Activated CD8-positive, alpha-beta T cell treated with anti-CD3 and anti-CD28 coated beads, Interleukin-2, amount 10 ng/mL, durations not matched to agents 7 days and 5 days (primary cell): ENCODE measurements at regions of chr1 and their contacts with region 1.

Region 1: DNA sequence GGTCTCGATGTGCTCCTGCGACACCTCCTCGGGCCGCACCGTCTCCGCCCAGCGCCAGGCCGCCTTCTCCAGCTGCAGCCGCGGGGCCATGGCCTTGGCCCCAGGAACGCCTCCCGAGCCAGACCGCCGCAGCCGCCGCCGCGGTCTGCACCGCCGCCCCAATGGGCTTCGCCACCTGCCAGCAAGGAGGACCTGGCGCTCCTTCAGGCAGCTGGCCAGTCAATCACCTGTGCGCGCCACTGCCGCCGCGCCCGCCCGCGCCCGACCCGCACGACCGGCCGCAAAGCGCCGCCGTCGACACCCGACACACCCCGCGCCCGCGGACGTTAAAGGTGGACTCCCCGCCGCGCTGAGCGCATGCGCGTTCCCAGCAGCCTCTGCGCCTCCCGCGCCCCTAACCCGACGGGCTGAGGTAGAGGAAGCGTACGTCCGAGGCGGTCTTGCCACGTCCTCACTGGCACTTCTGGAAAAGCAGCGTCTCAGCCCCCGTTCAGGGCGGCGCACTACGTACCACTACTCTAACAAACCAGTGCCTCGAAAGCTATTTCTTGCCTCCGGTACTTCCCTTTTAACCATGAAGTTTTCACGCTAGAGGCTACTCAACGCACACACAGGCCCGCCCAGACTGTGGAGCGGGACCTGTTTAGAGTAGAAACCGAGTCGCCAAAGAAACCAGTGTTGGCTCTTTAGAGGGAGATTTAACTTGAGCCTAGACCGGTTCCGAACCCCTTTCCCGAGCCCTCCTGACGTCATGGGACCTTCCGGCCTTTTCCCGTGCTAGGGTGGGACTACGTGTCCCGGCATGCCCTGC is at the start of gene USP48:
- DNase-seq: peak; percentile 97
- ATAC-seq: peak; percentile 89
- H3K4me3 Mint-ChIP-seq: peak within 1 kb of the TSS; percentile 82
- H3K27ac Mint-ChIP-seq: peak within 1 kb of the TSS; percentile 99
- H3K4me1 Mint-ChIP-seq: peaks cover 24% of the 10 kb centered on the region
- H3K27me3 Mint-ChIP-seq: peaks cover 3% of the 10 kb centered on the region
- total RNA-seq, gene USP48: 71.3 to 74.9 TPM

Region 2: GRCh38 chr1:21626851-21627339 is 156.2 kb before region 1 on chr1:
- CTCF ChIA-PET with region 1: no interaction called
- POLR2A ChIA-PET with region 1: no interaction called
- DNase-seq: no peak
- ATAC-seq: no peak
- H3K4me3 Mint-ChIP-seq: no peak overlapping the region
- H3K27ac Mint-ChIP-seq: no peak overlapping the region
- H3K4me1 Mint-ChIP-seq: peaks cover 2% of the 10 kb centered on the region
- H3K27me3 Mint-ChIP-seq: peaks cover 12% of the 10 kb centered on the region

Region 3: DNA sequence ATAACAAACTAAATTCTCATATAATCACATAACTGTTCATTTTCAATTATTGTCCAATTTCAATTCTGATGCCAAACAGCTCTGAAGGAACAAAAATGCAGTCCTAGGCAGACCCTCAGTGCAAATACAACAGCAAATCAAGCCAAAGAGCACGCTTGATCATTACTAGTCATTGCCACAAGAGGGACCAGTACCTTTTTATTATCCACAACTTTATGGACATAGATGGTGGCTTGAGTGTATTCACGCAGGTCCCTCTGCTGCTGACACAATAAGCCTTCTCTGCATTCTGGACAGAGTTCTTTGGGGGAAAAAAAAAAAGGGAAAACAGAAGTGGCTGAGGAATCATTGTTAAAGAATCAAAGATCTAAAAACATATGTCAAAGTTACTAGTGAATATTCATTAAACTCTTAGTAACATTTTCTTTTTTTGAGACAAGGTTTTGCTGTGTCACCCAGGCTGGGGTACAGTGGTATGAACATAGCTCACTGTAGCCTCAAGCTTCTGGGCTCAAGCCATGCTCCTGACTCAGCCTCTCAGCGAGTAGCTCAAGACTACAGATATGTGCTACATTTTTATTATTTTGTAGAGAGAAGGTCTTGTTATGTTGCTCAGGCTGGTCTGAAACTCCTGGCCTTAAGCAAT is 79.6 kb before region 1 on chr1:
- CTCF ChIA-PET with region 1: interaction called, 12 read pairs
- POLR2A ChIA-PET with region 1: interaction called, 3 read pairs
- DNase-seq: no peak
- ATAC-seq: no peak
- H3K4me3 Mint-ChIP-seq: no peak overlapping the region
- H3K27ac Mint-ChIP-seq: no peak overlapping the region
- H3K4me1 Mint-ChIP-seq: peaks cover 28% of the 10 kb centered on the region
- H3K27me3 Mint-ChIP-seq: no peaks in the 10 kb centered on the region

Region 4: GRCh38 chr1:21770201-21770600 is 12.9 kb before region 1 on chr1:
- CTCF ChIA-PET with region 1: interaction called, 7 read pairs
- POLR2A ChIA-PET with region 1: interaction called, 14 read pairs
- DNase-seq: no peak
- ATAC-seq: no peak
- H3K4me3 Mint-ChIP-seq: no peak overlapping the region
- H3K27ac Mint-ChIP-seq: peak overlapping the region; percentile 0
- H3K4me1 Mint-ChIP-seq: peaks cover 62% of the 10 kb centered on the region
- H3K27me3 Mint-ChIP-seq: no peaks in the 10 kb centered on the region

Region 5: DNA sequence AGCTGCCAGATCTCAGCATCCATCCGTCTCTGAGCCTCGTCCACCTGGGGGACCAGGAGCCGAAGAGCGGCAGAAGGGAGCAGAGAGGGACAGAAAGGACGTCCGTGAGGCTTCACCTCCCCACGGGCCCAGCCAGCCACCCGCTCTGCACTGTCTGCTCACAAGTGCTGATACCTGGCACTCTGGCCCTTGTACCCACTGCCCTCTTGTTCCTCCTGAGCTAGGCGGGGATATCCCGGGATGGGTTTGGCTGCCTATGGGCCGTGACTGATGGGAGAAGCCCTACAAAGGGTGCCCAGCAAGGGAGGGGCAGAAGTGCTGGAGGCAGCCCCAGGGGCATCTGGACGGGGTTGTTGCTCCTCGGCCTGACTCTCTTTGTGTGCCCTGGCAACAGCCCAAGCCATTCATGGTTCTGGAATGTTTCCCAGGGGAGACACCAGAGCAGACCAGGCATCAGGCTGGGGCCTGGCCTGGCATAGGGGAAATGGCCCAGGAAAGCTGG is 86.6 kb after region 1 on chr1:
- CTCF ChIA-PET with region 1: no interaction called
- POLR2A ChIA-PET with region 1: no interaction called
- DNase-seq: no peak
- ATAC-seq: no peak
- H3K4me3 Mint-ChIP-seq: no peak overlapping the region
- H3K27ac Mint-ChIP-seq: no peak overlapping the region
- H3K4me1 Mint-ChIP-seq: peaks cover 5% of the 10 kb centered on the region
- H3K27me3 Mint-ChIP-seq: no peaks in the 10 kb centered on the region

Region 6: GRCh38 chr1:21882669-21883415 is 99.8 kb after region 1 on chr1:
- CTCF ChIA-PET with region 1: no interaction called
- POLR2A ChIA-PET with region 1: no interaction called
- DNase-seq: no peak
- ATAC-seq: no peak
- H3K4me3 Mint-ChIP-seq: no peak overlapping the region
- H3K27ac Mint-ChIP-seq: no peak overlapping the region
- H3K4me1 Mint-ChIP-seq: no peaks in the 10 kb centered on the region
- H3K27me3 Mint-ChIP-seq: no peaks in the 10 kb centered on the region

Region 7: DNA sequence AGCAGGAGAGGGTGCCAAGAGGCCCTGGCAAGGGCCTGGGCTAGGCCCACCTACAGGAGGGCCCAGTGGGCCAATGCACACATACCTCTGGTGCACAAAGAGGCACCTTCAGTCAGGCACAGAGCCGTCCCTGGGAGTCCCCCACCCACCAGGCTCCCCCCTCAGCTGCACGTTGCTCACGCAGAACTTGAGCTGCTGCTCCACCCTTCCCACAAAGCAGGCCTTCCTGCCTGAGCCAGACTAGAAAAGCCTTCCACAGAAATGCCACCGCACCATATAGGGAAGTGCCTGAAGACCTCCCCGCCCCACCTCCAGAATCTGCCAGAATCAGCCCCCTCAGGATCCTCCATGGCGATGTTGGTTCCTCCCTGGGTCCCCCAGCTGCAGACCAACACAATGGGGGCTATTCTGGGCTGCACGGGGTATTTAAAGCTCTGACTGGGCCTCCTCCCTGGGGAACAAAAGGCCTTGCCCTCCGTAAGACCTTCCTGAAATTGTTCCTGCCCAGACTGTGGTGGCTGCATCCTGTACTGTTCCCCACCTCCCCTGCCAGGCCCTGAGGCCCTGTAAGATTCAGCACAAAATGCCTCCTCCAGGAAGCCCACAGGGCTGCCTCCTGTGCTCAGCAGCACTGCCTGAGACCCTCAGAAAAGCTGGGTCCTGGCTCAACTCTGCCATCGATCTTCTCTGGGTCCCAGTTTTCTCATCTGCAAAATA is 126.9 kb after region 1 on chr1:
- CTCF ChIA-PET with region 1: no interaction called
- POLR2A ChIA-PET with region 1: no interaction called
- DNase-seq: peak; percentile 41
- ATAC-seq: peak; percentile 46
- H3K4me3 Mint-ChIP-seq: no peak overlapping the region
- H3K27ac Mint-ChIP-seq: peak overlapping the region; percentile 66
- H3K4me1 Mint-ChIP-seq: peaks cover 28% of the 10 kb centered on the region
- H3K27me3 Mint-ChIP-seq: no peaks in the 10 kb centered on the region

Region 8: DNA sequence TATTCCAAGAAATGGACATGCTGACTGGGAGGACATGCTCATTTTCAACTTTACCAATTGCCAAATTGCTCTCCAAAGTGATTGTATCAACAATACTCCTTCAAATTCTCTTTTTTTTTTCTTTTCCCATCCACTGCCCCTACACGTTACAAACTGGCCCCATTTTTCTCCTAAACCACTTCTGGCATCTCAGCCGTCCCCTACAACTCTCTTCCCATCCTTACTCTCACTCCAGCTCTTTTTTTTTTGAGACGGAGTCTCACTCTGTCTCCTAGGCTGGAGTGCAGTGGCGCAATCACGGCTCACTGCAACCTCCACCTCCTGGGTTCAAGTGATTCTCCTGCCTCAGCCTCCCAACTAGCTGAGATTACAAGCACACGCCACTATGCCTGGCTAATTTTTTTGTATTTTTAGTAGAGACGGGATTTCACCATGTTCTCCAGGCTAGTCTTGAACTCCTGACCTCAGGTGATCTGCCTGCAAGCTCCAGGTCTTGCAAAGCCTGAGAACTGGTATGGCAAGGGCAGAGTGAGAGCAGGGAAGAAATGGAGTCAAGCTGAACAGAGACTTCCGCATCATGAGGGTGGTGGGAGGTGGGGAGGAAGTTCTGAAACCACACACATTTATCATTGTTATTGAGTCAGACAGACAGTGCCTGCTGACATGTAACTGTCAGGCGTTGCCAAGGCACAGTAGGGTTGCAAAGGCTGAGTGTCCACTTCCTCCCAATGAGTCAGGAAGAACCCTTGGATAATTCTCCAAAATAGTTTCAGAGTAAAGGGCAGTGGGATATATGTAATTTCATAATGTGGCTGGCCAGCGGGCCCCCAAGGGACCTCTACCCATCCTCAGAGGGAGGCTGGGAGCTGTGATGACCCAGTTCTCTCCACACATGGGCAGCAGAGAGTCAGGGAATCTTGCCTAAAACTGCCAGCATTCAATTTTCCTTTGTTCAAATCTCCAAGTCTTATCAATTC is 235.8 kb after region 1 on chr1:
- CTCF ChIA-PET with region 1: interaction called, 5 read pairs
- POLR2A ChIA-PET with region 1: interaction called, 27 read pairs
- DNase-seq: peak; percentile 82
- ATAC-seq: peak; percentile 92
- H3K4me3 Mint-ChIP-seq: peak overlapping the region; percentile 17
- H3K27ac Mint-ChIP-seq: peak overlapping the region; percentile 87
- H3K4me1 Mint-ChIP-seq: peaks cover 40% of the 10 kb centered on the region
- H3K27me3 Mint-ChIP-seq: no peaks in the 10 kb centered on the region